CD14-positive monocyte (primary cell): ENCODE measurements at regions of chr1 and their contacts with region 1.

Region 1: GRCh38 chr1:27940297-27940696 is 5.5 kb downstream of the SMPDL3B start:
- DNase-seq: peak; percentile 76 to 80 (median 80)
- H3K4me3 ChIP-seq: no peak overlapping the region
- H3K4me3 Mint-ChIP-seq: no peak overlapping the region
- H3K27ac ChIP-seq: peak overlapping the region; percentile 18 to 98
- H3K27ac Mint-ChIP-seq: peak overlapping the region; percentile 81 to 99 (median 91)
- H3K4me1 ChIP-seq: peaks cover 55 to 63% of the 10 kb centered on the region in 2 donors
- H3K4me1 Mint-ChIP-seq: peaks cover 60% of the 10 kb centered on the region
- H3K27me3 ChIP-seq: peaks cover 0 to 5% of the 10 kb centered on the region in 2 donors
- H3K27me3 Mint-ChIP-seq: peaks cover 9 to 11% (median 10%) of the 10 kb centered on the region in 3 donors
- CTCF ChIP-seq: peak; percentile 80

Region 2: DNA sequence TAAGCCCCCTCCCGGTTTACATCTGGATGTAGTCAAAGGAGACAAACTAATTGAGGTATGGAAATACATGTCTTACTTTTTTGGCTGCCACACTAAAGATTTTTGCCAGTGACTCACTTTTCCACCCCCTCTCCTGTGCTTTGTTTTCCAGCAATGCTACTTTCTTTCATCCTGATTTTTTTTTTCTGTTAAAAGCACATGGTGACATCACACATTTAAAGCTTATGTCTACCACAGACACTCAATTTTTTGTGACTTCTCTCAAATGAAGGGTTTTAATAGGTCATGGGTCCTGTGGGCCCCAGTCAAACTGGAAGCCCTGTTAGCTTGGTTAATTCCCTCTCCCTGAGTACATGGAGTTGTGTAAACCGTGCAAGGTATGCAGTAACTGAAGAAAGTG is 107.5 kb before region 1 on chr1:
- intact Hi-C with region 1: no loop called
- DNase-seq: no peak
- H3K4me3 ChIP-seq: no peak overlapping the region
- H3K4me3 Mint-ChIP-seq: no peak overlapping the region
- H3K27ac ChIP-seq: no peak overlapping the region
- H3K27ac Mint-ChIP-seq: no peak overlapping the region
- H3K4me1 ChIP-seq: peaks cover 14 to 19% of the 10 kb centered on the region in 2 donors
- H3K4me1 Mint-ChIP-seq: peaks cover 17% of the 10 kb centered on the region
- H3K27me3 ChIP-seq: no peaks in the 10 kb centered on the region
- H3K27me3 Mint-ChIP-seq: no peaks in the 10 kb centered on the region
- CTCF ChIP-seq: no peak

Region 3: DNA sequence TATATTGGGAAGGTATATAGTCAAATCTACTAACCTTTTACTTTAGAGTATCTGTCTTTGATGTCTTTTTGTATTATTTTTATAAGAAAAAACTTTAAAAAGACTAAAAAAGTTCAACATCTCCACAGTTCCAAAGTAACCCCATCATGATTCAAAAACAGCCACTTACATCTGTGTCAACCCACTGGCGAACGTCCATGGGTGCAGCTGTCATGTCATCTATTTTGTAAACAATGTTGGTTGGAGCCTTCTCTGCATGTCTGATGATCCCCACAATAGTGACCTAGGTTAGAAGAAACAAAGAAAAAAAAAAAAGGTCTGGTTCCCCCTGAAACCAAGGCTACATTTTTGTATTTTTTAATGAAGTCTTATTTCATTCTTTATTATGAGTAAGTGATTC is 33.5 kb before region 1 on chr1:
- intact Hi-C with region 1: loop called in 1 of 2 experiments (anchors 5 kb)
- DNase-seq: no peak
- H3K4me3 ChIP-seq: no peak overlapping the region
- H3K4me3 Mint-ChIP-seq: no peak overlapping the region
- H3K27ac ChIP-seq: peak overlapping the region in 1 of 2 donors; percentile 70
- H3K27ac Mint-ChIP-seq: peak overlapping the region in 4 of 7 donors; percentile 37 to 86 (median 58)
- H3K4me1 ChIP-seq: peaks cover 24 to 29% of the 10 kb centered on the region in 2 donors
- H3K4me1 Mint-ChIP-seq: peaks cover 38% of the 10 kb centered on the region
- H3K27me3 ChIP-seq: no peaks in the 10 kb centered on the region
- H3K27me3 Mint-ChIP-seq: no peaks in the 10 kb centered on the region
- CTCF ChIP-seq: no peak

Region 4: DNA sequence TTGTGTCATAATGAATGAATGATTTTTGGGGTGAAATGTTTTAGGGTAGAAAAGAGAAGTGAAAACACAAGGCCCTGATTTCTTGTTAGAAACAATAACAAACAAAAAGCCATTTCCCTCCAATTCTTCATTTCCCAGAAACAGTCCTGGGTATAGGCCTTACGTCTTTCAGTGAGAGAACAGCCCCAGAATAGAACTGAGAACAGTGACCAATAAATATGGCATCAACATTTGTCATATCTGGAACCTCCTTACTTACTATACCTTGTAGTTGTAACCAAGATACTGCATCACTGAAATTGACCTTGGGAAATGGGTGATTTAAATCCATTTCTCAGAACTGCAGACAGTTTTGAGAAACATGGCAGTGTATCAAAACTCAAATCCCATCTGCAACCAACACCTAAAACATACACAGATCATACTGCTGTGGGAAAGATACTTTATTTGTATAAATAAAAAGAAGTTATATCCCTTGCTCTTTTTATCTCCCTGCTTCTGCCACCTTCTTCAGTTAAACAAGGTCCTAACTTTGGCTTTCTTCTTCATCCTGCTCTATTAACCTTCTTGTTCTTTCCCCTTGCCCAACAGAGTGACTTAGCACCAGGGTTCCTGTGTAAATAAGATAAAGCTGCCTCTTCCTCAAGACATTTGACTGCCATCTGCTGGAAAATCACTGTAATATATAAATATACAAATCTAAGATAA is 39.0 kb after region 1 on chr1:
- intact Hi-C with region 1: loop called (anchors 2 to 5 kb)
- DNase-seq: peak; percentile 64 to 82 (median 80)
- H3K4me3 ChIP-seq: no peak overlapping the region
- H3K4me3 Mint-ChIP-seq: no peak overlapping the region
- H3K27ac ChIP-seq: peak overlapping the region in 1 of 2 donors; percentile 72
- H3K27ac Mint-ChIP-seq: no peak overlapping the region
- H3K4me1 ChIP-seq: peaks cover 11 to 13% of the 10 kb centered on the region in 2 donors
- H3K4me1 Mint-ChIP-seq: no peaks in the 10 kb centered on the region
- H3K27me3 ChIP-seq: no peaks in the 10 kb centered on the region
- H3K27me3 Mint-ChIP-seq: no peaks in the 10 kb centered on the region
- CTCF ChIP-seq: peak; percentile 75

Region 5: DNA sequence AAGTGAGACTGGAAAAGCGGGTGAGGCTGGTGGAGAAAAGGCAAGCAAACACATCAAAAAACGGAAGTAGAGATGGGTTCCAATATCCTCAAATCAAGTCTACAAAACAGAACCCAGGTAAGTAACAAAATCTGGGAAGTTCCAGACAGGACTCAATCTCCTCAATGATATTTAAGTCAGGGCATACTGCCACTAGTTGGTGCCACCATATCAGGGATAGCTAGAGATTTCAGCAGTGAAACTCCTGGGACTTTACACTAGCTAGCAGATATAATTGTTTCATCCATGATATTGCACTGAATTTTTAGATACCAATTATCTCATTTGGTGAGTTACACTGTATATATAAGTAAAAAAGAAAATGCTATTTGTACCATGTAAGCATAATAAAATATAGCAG is 96.1 kb after region 1 on chr1:
- intact Hi-C with region 1: no loop called
- DNase-seq: no peak
- H3K4me3 ChIP-seq: no peak overlapping the region
- H3K4me3 Mint-ChIP-seq: no peak overlapping the region
- H3K27ac ChIP-seq: no peak overlapping the region
- H3K27ac Mint-ChIP-seq: peak overlapping the region in 2 of 7 donors; percentile 13 to 35
- H3K4me1 ChIP-seq: no peaks in the 10 kb centered on the region
- H3K4me1 Mint-ChIP-seq: no peaks in the 10 kb centered on the region
- H3K27me3 ChIP-seq: no peaks in the 10 kb centered on the region
- H3K27me3 Mint-ChIP-seq: no peaks in the 10 kb centered on the region
- CTCF ChIP-seq: no peak